ENCODE measurements at regions of chr17 and their contacts with region 1.

Region 1: DNA sequence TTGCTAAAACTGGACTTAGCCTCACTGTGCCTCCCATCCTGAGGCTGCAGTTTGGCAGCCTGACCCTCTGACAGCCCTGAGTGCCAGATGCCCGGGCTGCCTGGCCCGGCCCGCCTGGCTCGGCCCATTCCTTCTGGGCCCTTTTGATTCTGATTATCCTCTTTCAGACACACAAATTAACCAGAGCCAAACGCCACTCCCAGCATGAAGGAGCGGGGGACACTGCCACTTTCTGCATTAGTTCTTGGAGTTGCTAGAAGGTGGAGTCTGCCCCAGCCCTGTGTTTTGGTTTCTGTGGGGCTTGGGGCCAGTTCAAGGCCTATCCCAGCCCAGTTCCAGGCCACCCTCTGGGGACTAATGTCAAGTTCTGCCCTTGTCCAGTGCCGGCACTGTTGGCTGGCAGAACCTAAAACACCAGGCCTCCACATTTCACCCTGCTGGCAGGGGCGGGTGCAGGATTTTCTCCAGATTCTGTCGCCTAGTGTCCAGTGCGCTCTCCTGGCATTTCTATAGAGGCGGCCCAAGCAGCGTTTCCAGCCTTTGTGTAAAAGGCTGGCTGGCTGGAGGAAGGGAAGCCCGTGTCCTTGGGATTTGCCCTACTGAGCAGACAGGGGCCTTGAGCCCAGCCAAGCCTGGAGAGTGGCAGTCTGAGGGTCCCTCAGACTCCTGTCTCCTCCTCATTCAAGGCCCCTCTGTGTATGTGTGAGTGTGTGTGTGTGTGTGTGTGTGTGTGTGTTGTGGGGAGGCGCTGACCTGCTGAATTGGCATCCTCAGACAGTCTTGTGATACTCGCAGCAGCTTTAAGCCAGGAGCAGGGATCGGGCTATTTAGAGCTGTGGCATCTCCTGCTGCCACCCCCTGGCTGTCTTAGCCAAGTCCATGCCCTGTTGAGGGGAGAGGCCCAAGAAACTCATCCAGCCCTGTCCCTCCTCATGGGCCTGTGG is 21.4 kb downstream of the PLCD3 start:
- DNase-seq: no peak
- H3K4me3 ChIP-seq: no peak overlapping the region
- H3K27ac ChIP-seq: peak overlapping the region; percentile 81
- H3K4me1 ChIP-seq: peaks cover 14 to 35% of the 10 kb centered on the region in 2 donors
- H3K27me3 ChIP-seq: no peaks in the 10 kb centered on the region
- CTCF ChIP-seq: peak in 1 of 3 experiments; percentile 4

Region 2: GRCh38 chr17:45051060-45051719 is 59.8 kb before region 1 on chr17 and contains the start of gene DCAKD:
- intact Hi-C with region 1: no loop called
- DNase-seq: peak; percentile 82 to 98
- H3K4me3 ChIP-seq: peak within 1 kb of the TSS; percentile 61 to 67
- H3K27ac ChIP-seq: peak within 1 kb of the TSS; percentile 92 to 94
- H3K4me1 ChIP-seq: peaks cover 8 to 17% of the 10 kb centered on the region in 2 donors
- H3K27me3 ChIP-seq: no peaks in the 10 kb centered on the region
- CTCF ChIP-seq: peak in 1 of 3 experiments; percentile 17
- total RNA-seq, gene DCAKD: 5.0 TPM

Region 3: GRCh38 chr17:45127598-45128300 is 16.8 kb after region 1 on chr17:
- intact Hi-C with region 1: loop called (anchors 1 kb)
- DNase-seq: peak in 1 of 2 donors; percentile 88
- H3K4me3 ChIP-seq: peak overlapping the region; percentile 29 to 39
- H3K27ac ChIP-seq: peak overlapping the region; percentile 95 to 97
- H3K4me1 ChIP-seq: peaks cover 14 to 63% of the 10 kb centered on the region in 2 donors
- H3K27me3 ChIP-seq: no peaks in the 10 kb centered on the region
- CTCF ChIP-seq: no peak

Measured in ascending aorta (tissue), 2 donors.